Heart left ventricle (tissue), 16 donors: ENCODE measurements at regions of chr3 and their contacts with region 1.

Region 1: DNA sequence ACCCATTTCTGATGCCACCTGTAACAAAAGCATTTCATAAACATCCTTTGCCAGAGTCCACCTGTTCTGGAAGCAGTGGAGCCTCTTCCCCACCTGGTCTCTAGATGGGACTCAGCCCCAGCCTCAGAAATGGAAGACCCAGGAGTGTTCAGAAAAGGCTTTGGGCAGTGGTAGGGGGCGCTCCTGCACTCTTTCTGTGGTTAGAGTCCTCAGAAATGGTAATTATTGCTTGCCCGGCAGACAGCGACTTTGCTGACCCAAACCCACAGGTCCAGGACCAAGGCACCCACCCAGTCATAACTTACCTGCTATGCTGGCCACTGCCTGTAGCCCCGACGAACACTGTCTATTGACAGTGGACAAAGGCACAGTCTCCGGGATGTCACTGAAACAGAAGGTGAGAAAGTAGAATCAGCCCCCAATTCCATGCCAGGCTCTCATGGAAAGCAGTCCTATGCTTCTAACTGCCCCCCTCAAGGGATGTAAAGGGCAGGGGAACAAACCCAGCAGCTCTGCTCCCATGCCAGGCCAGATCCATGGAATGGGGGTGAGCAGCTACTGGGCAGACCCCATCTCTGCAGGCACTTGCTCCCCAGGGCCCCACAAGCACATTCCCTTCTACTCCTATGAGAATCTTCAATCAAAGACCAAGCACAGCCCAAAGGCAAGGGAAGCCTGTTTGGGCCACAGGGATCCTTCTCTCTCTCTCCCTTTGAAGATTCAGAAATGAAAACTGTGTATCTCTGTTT is 5.1 kb downstream of the ACAA1 start:
- DNase-seq: no peak
- ATAC-seq: no peak
- H3K4me3 ChIP-seq: no peak overlapping the region
- H3K27ac ChIP-seq: peak overlapping the region in 2 of 12 donors; percentile 10 to 64
- H3K4me1 ChIP-seq: peaks cover 0 to 61% (median 42%) of the 10 kb centered on the region in 12 donors
- H3K27me3 ChIP-seq: no peaks in the 10 kb centered on the region
- CTCF ChIP-seq: peak in 5 of 12 donors; percentile 3 to 31 (median 24)
- POLR2A ChIP-seq: no peak

Region 2: GRCh38 chr3:36827133-36827532 is 1304.7 kb before region 1 on chr3:
- intact Hi-C with region 1: no loop called
- DNase-seq: no peak
- ATAC-seq: peak in 3 of 4 donors; percentile 59 to 75 (median 73)
- H3K4me3 ChIP-seq: no peak overlapping the region
- H3K27ac ChIP-seq: no peak overlapping the region
- H3K4me1 ChIP-seq: peaks cover 0 to 7% (median 0%) of the 10 kb centered on the region in 12 donors
- H3K27me3 ChIP-seq: no peaks in the 10 kb centered on the region
- CTCF ChIP-seq: no peak
- POLR2A ChIP-seq: no peak

Region 3: GRCh38 chr3:38177181-38177580 is 45.4 kb after region 1 on chr3:
- intact Hi-C with region 1: loop called in 1 of 10 experiments (anchors 5 kb)
- DNase-seq: no peak
- ATAC-seq: no peak
- H3K4me3 ChIP-seq: no peak overlapping the region
- H3K27ac ChIP-seq: no peak overlapping the region
- H3K4me1 ChIP-seq: peaks cover 0 to 30% (median 2%) of the 10 kb centered on the region in 12 donors
- H3K27me3 ChIP-seq: no peaks in the 10 kb centered on the region
- CTCF ChIP-seq: no peak
- POLR2A ChIP-seq: no peak

Region 4: GRCh38 chr3:38235466-38235865 is 103.7 kb after region 1 on chr3:
- intact Hi-C with region 1: loop called in 2 of 10 experiments (anchors 10 kb)
- DNase-seq: no peak
- ATAC-seq: no peak
- H3K4me3 ChIP-seq: no peak overlapping the region
- H3K27ac ChIP-seq: no peak overlapping the region
- H3K4me1 ChIP-seq: no peaks in the 10 kb centered on the region
- H3K27me3 ChIP-seq: no peaks in the 10 kb centered on the region
- CTCF ChIP-seq: no peak
- POLR2A ChIP-seq: no peak

Region 5: GRCh38 chr3:38397320-38397719 is 265.5 kb after region 1 on chr3:
- intact Hi-C with region 1: no loop called
- DNase-seq: peak in 1 of 5 donors; percentile 33
- ATAC-seq: peak; percentile 37 to 64 (median 60)
- H3K4me3 ChIP-seq: no peak overlapping the region
- H3K27ac ChIP-seq: no peak overlapping the region
- H3K4me1 ChIP-seq: no peaks in the 10 kb centered on the region
- H3K27me3 ChIP-seq: no peaks in the 10 kb centered on the region
- CTCF ChIP-seq: no peak
- POLR2A ChIP-seq: no peak